PC-3 (cell line): ENCODE measurements at regions of chr9 and their contacts with region 1.

Region 1: DNA sequence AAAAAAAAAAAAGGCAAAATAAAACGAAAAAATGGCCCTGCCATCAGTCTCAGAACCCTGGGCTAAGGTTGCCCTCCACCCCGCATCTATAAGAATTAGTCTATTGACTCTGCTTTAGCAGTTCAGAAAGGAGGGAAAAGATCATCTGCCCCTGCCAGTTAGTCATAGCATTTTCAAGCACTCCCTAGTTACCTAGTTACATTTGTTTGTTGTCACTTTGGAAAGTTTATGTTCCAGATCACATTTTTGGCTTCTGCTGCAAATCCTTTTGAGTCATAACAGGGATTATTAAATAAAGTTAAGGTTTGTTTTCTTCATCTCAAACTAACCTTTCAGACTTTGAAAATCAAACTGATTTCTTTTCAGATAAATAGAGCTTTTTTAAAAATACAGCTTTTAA is 52.1 kb downstream of the AQP7 start:
- DNase-seq: peak; percentile 87
- ATAC-seq: peak; percentile 96
- H3K4me3 ChIP-seq: no peak overlapping the region
- H3K27ac ChIP-seq: peak overlapping the region; percentile 87
- H3K4me1 ChIP-seq: peaks cover 35% of the 10 kb centered on the region
- H3K27me3 ChIP-seq: no peaks in the 10 kb centered on the region
- CTCF ChIP-seq: no peak

Region 2: DNA sequence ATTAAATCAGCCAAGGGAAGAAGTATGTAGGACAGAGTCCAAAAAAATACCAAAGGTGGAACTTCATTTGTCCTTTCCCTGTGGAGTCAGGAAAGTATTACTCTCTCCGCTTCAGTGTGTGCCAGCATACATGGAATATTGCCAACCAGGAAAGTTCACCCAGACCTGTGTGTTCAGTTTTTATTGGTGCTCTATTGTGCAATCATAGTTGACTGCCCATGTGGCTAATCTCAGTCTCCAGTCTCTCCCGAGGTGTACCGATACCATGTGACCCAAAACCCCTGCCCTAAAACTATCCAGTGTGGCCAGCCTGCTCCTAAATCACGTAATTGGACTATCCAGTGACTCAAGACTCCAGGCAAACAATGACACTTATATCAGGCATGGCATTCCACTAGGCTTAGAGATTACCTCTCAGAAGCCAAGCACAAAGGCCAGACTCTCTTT is 21.2 kb before region 1 on chr9:
- CTCF ChIA-PET with region 1: no interaction called
- POLR2A ChIA-PET with region 1: no interaction called
- intact Hi-C with region 1: loop called (anchors 1 kb)
- DNase-seq: peak; percentile 98
- ATAC-seq: peak; percentile 91
- H3K4me3 ChIP-seq: no peak overlapping the region
- H3K27ac ChIP-seq: peak overlapping the region; percentile 94
- H3K4me1 ChIP-seq: peaks cover 32% of the 10 kb centered on the region
- H3K27me3 ChIP-seq: no peaks in the 10 kb centered on the region
- CTCF ChIP-seq: no peak

Region 3: DNA sequence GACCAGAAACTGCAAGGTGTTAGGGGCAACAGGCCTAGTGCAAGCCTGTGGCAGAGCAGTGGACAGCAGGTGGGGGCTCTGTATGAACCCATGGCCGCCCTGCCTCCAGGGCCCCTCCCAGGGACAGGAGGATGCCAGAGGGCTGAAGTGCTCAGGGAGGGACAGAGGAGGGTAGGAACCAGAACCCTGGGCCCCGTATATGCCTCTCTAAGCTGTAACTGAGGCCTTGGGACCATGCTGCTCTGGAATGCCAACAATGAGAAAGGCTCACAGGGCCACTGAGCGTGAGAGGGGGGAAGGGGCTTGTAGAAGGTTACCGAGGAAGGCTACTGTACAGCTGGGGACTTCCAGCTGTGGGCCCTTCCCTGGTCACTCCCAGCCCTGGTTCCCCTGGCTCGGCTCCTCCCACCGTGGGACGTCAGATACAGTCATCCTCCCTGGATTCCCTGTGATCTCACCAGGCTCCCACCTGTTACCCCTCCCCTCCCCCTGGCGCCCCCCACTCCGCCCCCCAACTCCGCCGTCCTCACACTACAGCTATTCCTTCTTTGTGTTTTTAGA is 31.0 kb after region 1 on chr9:
- CTCF ChIA-PET with region 1: no interaction called
- POLR2A ChIA-PET with region 1: no interaction called
- intact Hi-C with region 1: no loop called
- DNase-seq: no peak
- ATAC-seq: no peak
- H3K4me3 ChIP-seq: no peak overlapping the region
- H3K27ac ChIP-seq: no peak overlapping the region
- H3K4me1 ChIP-seq: no peaks in the 10 kb centered on the region
- H3K27me3 ChIP-seq: no peaks in the 10 kb centered on the region
- CTCF ChIP-seq: no peak

Region 4: GRCh38 chr9:33393581-33393980 is 43.3 kb after region 1 on chr9:
- CTCF ChIA-PET with region 1: no interaction called
- POLR2A ChIA-PET with region 1: no interaction called
- intact Hi-C with region 1: no loop called
- DNase-seq: no peak
- ATAC-seq: no peak
- H3K4me3 ChIP-seq: no peak overlapping the region
- H3K27ac ChIP-seq: no peak overlapping the region
- H3K4me1 ChIP-seq: peaks cover 6% of the 10 kb centered on the region; the same call in 1 of the 2 replicates
- H3K27me3 ChIP-seq: no peaks in the 10 kb centered on the region
- CTCF ChIP-seq: no peak